PC-9 (cell line): ENCODE measurements at regions of chr19 and their contacts with region 1.

Region 1: GRCh38 chr19:50804420-50805272 is 14.4 kb downstream of the ACP4 start:
- DNase-seq: peak; percentile 96 to 98
- H3K4me3 ChIP-seq: peak overlapping the region; percentile 76
- H3K27ac ChIP-seq: peak overlapping the region; percentile 84
- H3K4me1 ChIP-seq: peaks cover 20% of the 10 kb centered on the region
- H3K27me3 ChIP-seq: no peaks in the 10 kb centered on the region
- CTCF ChIP-seq: no peak

Region 2: DNA sequence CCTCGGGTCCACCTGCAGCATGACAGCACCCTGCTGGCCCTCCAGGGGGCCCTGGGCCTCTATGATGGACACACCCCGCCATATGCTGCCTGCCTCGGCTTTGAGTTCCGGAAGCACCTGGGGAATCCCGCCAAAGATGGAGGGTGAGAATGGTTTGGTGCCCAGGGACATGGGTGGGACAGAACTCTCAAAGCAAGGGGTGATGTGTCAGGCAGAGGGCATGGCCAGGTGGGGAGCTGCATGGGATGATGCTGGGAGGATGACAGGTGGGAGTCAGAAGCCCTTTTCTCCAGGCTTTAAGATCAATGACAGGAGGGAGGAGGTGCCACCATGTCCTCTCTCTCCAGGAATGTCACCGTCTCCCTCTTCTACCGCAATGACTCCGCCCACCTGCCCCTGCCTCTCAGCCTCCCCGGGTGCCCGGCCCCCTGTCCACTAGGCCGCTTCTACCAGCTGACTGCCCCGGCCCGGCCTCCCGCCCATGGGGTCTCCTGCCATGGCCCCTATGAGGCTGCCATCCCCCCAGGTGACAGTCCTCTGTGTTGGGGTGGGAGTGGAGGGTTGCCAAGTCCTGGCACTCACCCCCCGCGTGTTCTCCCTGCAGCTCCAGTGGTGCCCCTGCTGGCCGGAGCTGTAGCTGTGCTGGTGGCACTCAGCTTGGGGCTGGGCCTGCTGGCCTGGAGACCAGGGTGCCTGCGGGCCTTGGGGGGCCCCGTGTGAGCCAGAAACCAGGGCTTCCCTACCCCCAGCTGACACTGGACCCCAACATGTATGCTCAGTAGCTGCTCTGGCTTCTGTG is 10.0 kb before region 1 on chr19:
- CTCF ChIA-PET with region 1: no interaction called
- POLR2A ChIA-PET with region 1: interaction called, 16 read pairs
- intact Hi-C with region 1: no loop called
- DNase-seq: peak in 1 of 2 experiments; percentile 43
- H3K4me3 ChIP-seq: no peak overlapping the region
- H3K27ac ChIP-seq: no peak overlapping the region
- H3K4me1 ChIP-seq: no peaks in the 10 kb centered on the region
- H3K27me3 ChIP-seq: no peaks in the 10 kb centered on the region
- CTCF ChIP-seq: peak; percentile 44; the same call in 1 of the 2 replicates